ENCODE measurements at regions of chr6 and their contacts with region 1.

Region 1: DNA sequence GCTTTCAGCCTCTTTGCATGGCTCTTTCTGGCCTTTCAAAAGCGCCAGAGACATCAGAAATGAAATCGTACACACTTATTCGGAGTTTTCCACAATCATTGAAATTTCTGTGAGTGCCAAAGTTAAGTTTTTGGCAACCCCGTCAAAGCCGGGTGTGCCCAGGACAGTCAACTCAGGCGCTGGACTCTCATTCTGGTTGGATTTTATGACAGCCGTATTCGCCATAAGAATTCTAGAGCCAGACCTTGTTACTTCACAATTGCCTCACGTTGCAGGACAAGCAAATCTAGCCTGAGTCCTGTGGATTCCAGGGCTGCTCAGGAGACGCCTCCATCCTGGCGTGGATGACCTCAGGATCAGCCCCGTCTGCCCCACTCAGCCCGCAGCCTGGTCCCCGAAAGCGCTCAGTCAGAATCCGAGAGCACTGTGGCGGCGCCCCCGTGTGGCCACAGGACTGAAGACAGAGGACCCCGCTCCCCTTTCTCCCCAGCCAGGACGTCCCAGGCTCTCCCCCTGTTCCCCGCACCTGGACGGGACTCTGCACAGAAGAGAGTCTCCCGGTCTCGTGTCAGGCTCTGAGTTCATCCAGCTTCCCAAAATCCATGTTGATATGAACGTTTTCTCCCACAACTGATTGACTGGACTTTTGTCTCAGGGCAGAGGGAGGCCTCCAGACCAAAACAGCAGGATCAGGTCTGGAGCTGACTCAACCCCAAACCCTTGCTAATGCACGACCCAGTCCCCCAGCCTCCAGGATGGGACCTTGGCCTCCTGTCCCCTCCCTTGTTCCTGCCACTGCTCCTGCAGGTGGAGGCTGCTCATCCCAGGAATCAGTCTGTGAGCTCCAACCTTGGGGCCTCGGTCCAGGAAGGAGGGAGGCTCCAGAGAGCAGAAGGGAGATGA is 38.2 kb downstream of the MICA start:
- DNase-seq: peak; percentile 94
- ATAC-seq: peak; percentile 93
- H3K4me3 Mint-ChIP-seq: no peak overlapping the region
- H3K27ac Mint-ChIP-seq: no peak overlapping the region
- H3K4me1 Mint-ChIP-seq: peaks cover 4% of the 10 kb centered on the region
- H3K27me3 Mint-ChIP-seq: peaks cover 23% of the 10 kb centered on the region
- CTCF ChIP-seq: peak; percentile 90

Region 2: GRCh38 chr6:31203345-31203979 is 238.2 kb before region 1 on chr6:
- CTCF ChIA-PET with region 1: no interaction called
- POLR2A ChIA-PET with region 1: no interaction called
- intact Hi-C with region 1: no loop called
- DNase-seq: peak; percentile 73
- ATAC-seq: peak; percentile 74
- H3K4me3 Mint-ChIP-seq: peak overlapping the region; percentile 85
- H3K27ac Mint-ChIP-seq: peak overlapping the region; percentile 97
- H3K4me1 Mint-ChIP-seq: peaks cover 59% of the 10 kb centered on the region
- H3K27me3 Mint-ChIP-seq: no peaks in the 10 kb centered on the region
- CTCF ChIP-seq: no peak

Region 3: GRCh38 chr6:31396422-31397152 is 45.0 kb before region 1 on chr6:
- CTCF ChIA-PET with region 1: interaction called, 98 read pairs
- POLR2A ChIA-PET with region 1: interaction called, 3 read pairs
- intact Hi-C with region 1: loop called (anchors 1 kb)
- DNase-seq: peak; percentile 95
- ATAC-seq: peak; percentile 84
- H3K4me3 Mint-ChIP-seq: no peak overlapping the region
- H3K27ac Mint-ChIP-seq: no peak overlapping the region
- H3K4me1 Mint-ChIP-seq: peaks cover 24% of the 10 kb centered on the region
- H3K27me3 Mint-ChIP-seq: no peaks in the 10 kb centered on the region
- CTCF ChIP-seq: peak; percentile 80

Region 4: GRCh38 chr6:31430449-31430848 is 11.2 kb before region 1 on chr6:
- CTCF ChIA-PET with region 1: interaction called, 15 read pairs
- POLR2A ChIA-PET with region 1: interaction called, 4 read pairs
- intact Hi-C with region 1: no loop called
- DNase-seq: no peak
- ATAC-seq: no peak
- H3K4me3 Mint-ChIP-seq: no peak overlapping the region
- H3K27ac Mint-ChIP-seq: no peak overlapping the region
- H3K4me1 Mint-ChIP-seq: no peaks in the 10 kb centered on the region
- H3K27me3 Mint-ChIP-seq: peaks cover 2% of the 10 kb centered on the region
- CTCF ChIP-seq: no peak

Region 5: DNA sequence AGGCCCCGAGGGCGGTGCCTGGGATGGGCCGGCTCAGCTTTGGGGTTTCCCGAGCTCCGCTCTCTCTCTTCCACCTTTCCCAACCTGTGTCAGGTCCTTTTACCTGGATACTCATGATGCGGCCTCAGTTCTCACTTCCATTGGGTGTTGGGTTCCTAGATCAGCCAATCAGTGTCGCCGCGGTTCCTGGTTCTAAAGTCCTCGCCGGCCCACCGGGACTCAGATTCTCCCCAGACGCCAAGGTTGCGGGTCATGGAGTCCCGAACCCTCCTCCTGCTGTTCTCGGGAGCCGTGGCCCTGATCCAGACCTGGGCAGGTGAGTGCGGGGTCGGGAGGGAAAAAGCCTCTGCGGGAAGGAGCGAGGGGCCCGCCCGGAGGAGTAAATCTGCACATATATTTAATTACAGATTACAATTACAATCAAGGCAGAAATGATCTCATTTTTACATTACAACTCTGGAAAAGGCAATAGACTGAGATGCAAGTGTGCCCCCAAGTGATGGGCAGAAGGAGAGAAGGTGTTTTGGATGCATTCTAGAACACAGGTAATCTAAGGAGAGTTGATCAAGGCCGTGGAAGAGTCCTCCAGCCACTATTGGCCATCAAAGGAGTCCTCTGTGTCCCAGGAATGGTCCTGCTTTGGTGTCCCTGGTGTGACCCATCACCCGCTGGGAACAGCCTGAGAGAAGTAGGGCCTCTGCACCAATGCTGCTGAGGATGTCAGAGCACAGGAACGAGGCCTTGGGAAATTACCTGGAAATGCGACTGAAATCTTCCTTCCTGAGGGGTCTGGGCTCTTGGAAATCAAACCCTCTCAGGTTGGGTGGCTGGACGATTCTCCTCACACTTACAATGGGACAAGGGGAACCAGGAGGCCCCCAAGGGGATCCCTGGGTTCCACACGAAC is 21.6 kb after region 1 on chr6:
- CTCF ChIA-PET with region 1: interaction called, 17 read pairs
- POLR2A ChIA-PET with region 1: no interaction called
- intact Hi-C with region 1: no loop called
- DNase-seq: peak; percentile 93
- ATAC-seq: peak; percentile 95
- H3K4me3 Mint-ChIP-seq: peak overlapping the region; percentile 100
- H3K27ac Mint-ChIP-seq: peak overlapping the region; percentile 97
- H3K4me1 Mint-ChIP-seq: peaks cover 51% of the 10 kb centered on the region
- H3K27me3 Mint-ChIP-seq: no peaks in the 10 kb centered on the region
- CTCF ChIP-seq: no peak

Measured in activated CD8-positive, alpha-beta T cell treated with anti-CD3 and anti-CD28 coated beads for 36 hours (primary cell).